Endothelial cell of umbilical vein (primary cell): ENCODE measurements at regions of chr16 and their contacts with region 1.

Region 1: DNA sequence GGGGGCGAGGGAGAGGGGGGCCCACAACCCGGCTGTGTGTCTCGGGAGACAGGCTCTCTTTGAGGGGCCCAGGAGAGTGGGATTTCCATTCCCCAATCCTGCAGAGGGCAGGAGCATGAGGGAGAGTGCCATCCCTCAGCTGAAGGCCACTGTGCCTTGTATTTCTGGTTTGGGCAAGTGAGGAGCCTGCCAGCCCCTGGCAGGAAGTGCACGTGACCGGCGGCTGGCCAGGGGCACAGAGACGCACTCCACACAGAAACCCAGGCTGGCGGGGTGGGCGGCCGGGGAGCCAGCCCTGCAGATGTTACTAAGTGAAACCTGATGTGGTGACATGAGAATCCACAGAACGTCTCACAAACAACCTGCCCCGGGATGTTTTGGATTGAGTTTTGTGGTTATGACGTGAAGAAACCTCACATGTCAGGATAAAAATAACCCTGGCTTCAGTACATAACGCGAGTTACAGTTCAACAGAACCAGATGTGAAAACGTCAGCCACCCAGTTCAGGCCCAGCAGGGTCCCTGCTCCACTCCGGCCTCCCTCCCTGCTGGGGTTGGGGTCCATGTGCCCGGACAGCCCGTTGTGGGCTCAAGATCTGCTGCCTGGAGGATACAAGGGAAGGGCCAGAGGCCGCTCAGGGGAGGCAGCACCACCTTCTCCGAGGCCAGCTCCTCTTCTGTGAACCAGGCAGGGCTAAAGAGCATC is 51.7 kb upstream of the MTSS2 start:
- DNase-seq: no peak
- H3K4me3 ChIP-seq: no peak overlapping the region
- H3K27ac ChIP-seq: no peak overlapping the region
- H3K4me1 ChIP-seq: peaks cover 3% of the 10 kb centered on the region
- H3K27me3 ChIP-seq: no peaks in the 10 kb centered on the region
- CTCF ChIP-seq: no peak
- POLR2A ChIP-seq: no peak

Region 2: GRCh38 chr16:70679666-70680494 is 57.6 kb before region 1 on chr16:
- CTCF ChIA-PET with region 1: interaction called, 54 read pairs
- POLR2A ChIA-PET with region 1: interaction called, 3 read pairs
- dilution Hi-C with region 1: no loop called
- intact Hi-C with region 1: loop called (anchors 1 kb)
- DNase-seq: no peak
- H3K4me3 ChIP-seq: no peak overlapping the region
- H3K27ac ChIP-seq: no peak overlapping the region
- H3K4me1 ChIP-seq: peaks cover 5% of the 10 kb centered on the region
- H3K27me3 ChIP-seq: no peaks in the 10 kb centered on the region
- CTCF ChIP-seq: peak; percentile 49 to 56
- POLR2A ChIP-seq: no peak

Region 3: DNA sequence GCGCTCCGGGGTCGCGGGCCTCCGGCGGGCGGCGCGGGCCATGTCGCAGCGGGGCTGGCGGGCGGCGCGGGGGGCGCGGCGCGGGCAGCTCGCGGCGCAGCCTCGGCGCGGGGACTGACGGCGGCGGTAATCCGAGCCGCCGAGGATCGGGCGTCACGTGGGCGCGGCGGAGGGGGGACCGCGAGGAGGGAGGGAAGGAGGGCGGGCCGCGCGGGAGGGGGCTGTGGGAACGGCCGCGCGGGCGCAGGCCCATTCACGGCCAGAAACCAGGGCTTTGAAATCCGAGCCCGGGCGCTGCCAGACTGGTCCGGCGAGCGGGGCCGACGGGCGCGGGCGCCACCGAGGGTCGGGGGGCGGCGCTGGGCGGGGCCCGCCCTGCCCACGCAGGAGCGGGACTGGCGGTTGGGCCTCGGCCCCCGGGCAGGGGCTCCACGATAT is 51.6 kb before region 1 on chr16 and contains the start of gene MTSS2:
- CTCF ChIA-PET with region 1: interaction called, 54 read pairs
- POLR2A ChIA-PET with region 1: no interaction called
- dilution Hi-C with region 1: no loop called
- intact Hi-C with region 1: loop called (anchors 1 kb)
- DNase-seq: peak; percentile 89
- H3K4me3 ChIP-seq: peak within 1 kb of the TSS; percentile 58 to 94 (median 61)
- H3K27ac ChIP-seq: peak within 1 kb of the TSS; percentile 34
- H3K4me1 ChIP-seq: peaks cover 21% of the 10 kb centered on the region
- H3K27me3 ChIP-seq: no peaks in the 10 kb centered on the region
- CTCF ChIP-seq: no peak
- POLR2A ChIP-seq: peak; percentile 49
- total RNA-seq, gene MTSS2: 37.6 and 42.3 TPM in 2 replicates

Region 4: GRCh38 chr16:70695331-70696070 is 42.0 kb before region 1 on chr16:
- CTCF ChIA-PET with region 1: interaction called, 20 read pairs
- POLR2A ChIA-PET with region 1: interaction called, 3 read pairs
- dilution Hi-C with region 1: no loop called
- intact Hi-C with region 1: no loop called
- DNase-seq: peak; percentile 86
- H3K4me3 ChIP-seq: no peak overlapping the region
- H3K27ac ChIP-seq: peak overlapping the region; percentile 24
- H3K4me1 ChIP-seq: peaks cover 35% of the 10 kb centered on the region
- H3K27me3 ChIP-seq: no peaks in the 10 kb centered on the region
- CTCF ChIP-seq: peak in 1 of 2 donors; percentile 39
- POLR2A ChIP-seq: no peak